IMR-90 (cell line): ENCODE measurements at regions of chr20 and their contacts with region 1.

Region 1: GRCh38 chr20:50980851-50981713 is 22.5 kb downstream of the MOCS3 start:
- DNase-seq: peak; percentile 75
- ATAC-seq: peak; percentile 41
- H3K4me3 ChIP-seq: no peak overlapping the region
- H3K27ac ChIP-seq: peak overlapping the region; percentile 38
- H3K4me1 ChIP-seq: peaks cover 24% of the 10 kb centered on the region
- H3K27me3 ChIP-seq: no peaks in the 10 kb centered on the region
- CTCF ChIP-seq: peak; percentile 87
- POLR2A ChIP-seq: peak; percentile 55; the same call in 1 of the 2 replicates
- RAD21 ChIP-seq: peak; percentile 67

Region 2: GRCh38 chr20:50762435-50763201 is 218.5 kb before region 1 on chr20:
- CTCF ChIA-PET with region 1: no interaction called
- POLR2A ChIA-PET with region 1: no interaction called
- dilution Hi-C with region 1: no loop called
- in situ Hi-C with region 1: no loop called
- intact Hi-C with region 1: no loop called
- DNase-seq: peak; percentile 76
- ATAC-seq: peak; percentile 77
- H3K4me3 ChIP-seq: no peak overlapping the region
- H3K27ac ChIP-seq: peak overlapping the region; percentile 18; the same call in 1 of the 2 replicates
- H3K4me1 ChIP-seq: peaks cover 11% of the 10 kb centered on the region
- H3K27me3 ChIP-seq: no peaks in the 10 kb centered on the region
- CTCF ChIP-seq: no peak
- POLR2A ChIP-seq: no peak
- RAD21 ChIP-seq: no peak

Region 3: DNA sequence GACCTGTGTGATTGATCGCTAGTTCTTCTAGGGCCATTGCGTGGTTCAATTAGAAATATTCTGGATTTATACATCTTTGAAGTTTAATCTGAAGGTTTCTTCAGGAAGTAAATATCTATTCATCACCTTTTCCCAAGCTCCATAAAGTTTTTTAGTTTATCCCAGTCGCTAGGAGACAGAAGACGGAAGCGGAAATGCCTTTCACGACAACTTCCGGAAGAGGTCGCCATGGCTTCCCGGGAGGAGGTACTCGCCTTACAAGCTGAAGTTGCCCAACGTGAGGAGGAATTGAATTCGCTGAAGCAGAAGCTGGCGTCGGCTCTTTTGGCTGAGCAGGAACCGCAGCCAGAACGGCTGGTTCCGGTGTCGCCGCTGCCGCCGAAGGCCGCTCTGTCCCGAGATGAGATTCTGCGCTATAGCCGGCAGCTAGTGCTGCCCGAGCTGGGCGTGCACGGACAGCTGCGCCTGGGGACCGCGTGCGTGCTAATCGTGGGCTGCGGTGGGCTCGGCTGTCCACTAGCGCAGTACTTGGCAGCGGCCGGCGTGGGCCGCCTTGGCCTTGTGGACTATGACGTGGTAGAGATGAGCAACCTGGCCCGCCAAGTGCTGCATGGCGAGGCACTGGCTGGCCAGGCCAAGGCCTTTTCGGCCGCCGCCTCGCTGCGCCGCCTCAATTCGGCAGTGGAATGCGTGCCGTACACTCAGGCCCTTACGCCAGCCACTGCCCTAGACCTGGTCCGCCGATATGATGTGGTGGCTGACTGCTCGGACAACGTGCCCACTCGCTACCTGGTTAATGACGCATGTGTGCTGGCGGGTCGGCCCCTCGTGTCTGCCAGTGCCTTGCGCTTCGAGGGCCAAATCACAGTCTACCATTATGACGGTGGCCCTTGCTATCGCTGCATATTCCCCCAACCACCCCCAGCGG is 22.2 kb before region 1 on chr20 and contains the start of gene MOCS3:
- CTCF ChIA-PET with region 1: interaction called, 4 read pairs
- POLR2A ChIA-PET with region 1: no interaction called
- dilution Hi-C with region 1: no loop called
- in situ Hi-C with region 1: no loop called
- intact Hi-C with region 1: loop called (anchors 2 kb)
- DNase-seq: peak; percentile 93
- ATAC-seq: peak; percentile 83
- H3K4me3 ChIP-seq: peak within 1 kb of the TSS; percentile 91
- H3K27ac ChIP-seq: peak within 1 kb of the TSS; percentile 93
- H3K4me1 ChIP-seq: peaks cover 10% of the 10 kb centered on the region
- H3K27me3 ChIP-seq: no peaks in the 10 kb centered on the region
- CTCF ChIP-seq: 0 out of 2 replicates have a peak, but pooled peaks have one; percentile 0
- POLR2A ChIP-seq: peak; percentile 78; the same call in 1 of the 2 replicates
- RAD21 ChIP-seq: no peak; the same call in 1 of the 2 replicates
- total RNA-seq, gene MOCS3: 9.9 and 11.4 TPM in 2 replicates

Region 4: DNA sequence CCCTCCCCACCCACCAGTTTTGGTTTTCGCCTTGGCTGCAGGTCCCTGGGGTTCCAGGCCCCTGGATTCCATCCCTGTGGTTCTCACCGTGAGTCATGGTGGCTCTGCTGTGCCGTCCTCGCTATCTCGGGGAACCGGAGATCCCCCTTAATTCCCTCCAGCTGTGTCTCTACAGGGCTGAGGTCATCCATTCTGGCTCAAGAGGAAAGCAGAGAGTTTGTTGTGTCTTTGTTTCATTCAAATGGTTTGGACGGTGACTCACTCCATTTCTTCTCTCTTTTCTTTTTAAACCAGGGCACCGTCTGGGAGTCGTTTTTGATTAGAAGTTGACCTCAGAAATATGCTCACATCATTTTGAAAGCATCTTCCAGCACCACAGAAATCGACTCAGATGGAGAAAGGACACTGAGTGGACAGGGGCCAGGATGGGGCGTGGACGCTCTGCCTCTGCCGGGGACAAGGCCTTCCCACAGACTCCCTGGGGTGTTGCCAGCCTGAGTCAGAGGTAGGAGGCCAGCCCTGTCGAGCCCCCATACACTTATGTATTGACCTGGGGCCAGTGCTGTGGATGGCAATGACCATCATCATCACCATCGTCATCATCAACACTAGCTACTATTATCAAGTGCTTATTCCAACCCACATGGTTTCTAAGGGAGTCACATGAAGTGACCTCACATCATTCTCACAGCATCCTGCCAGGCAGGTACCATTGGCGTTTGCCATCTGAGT is 385.2 kb after region 1 on chr20:
- CTCF ChIA-PET with region 1: interaction called, 3 read pairs
- POLR2A ChIA-PET with region 1: no interaction called
- dilution Hi-C with region 1: no loop called
- in situ Hi-C with region 1: loop called (anchors 5 kb)
- intact Hi-C with region 1: loop called (anchors 1 kb)
- DNase-seq: peak; percentile 100
- ATAC-seq: peak; percentile 89
- H3K4me3 ChIP-seq: no peak overlapping the region
- H3K27ac ChIP-seq: peak overlapping the region; percentile 91
- H3K4me1 ChIP-seq: peaks cover 21% of the 10 kb centered on the region
- H3K27me3 ChIP-seq: no peaks in the 10 kb centered on the region
- CTCF ChIP-seq: no peak
- POLR2A ChIP-seq: no peak; the same call in 1 of the 2 replicates
- RAD21 ChIP-seq: no peak

Region 5: GRCh38 chr20:51610780-51611624 is 629.9 kb after region 1 on chr20:
- CTCF ChIA-PET with region 1: no interaction called
- POLR2A ChIA-PET with region 1: no interaction called
- dilution Hi-C with region 1: no loop called
- in situ Hi-C with region 1: no loop called
- intact Hi-C with region 1: loop called (anchors 5 kb)
- DNase-seq: no peak
- ATAC-seq: 0 out of 2 replicates have a peak, but pooled peaks have one; percentile 29
- H3K4me3 ChIP-seq: no peak overlapping the region
- H3K27ac ChIP-seq: no peak overlapping the region
- H3K4me1 ChIP-seq: no peaks in the 10 kb centered on the region; the same call in 1 of the 2 replicates
- H3K27me3 ChIP-seq: no peaks in the 10 kb centered on the region
- CTCF ChIP-seq: no peak
- POLR2A ChIP-seq: no peak
- RAD21 ChIP-seq: no peak